ENCODE measurements at regions of chr2 and their contacts with region 1.

Region 1: GRCh38 chr2:174487108-174487819 is 435 bp upstream of the GPR155 start:
- DNase-seq: peak; percentile 88
- H3K4me3 Mint-ChIP-seq: peak overlapping the region; percentile 89
- H3K27ac Mint-ChIP-seq: peak overlapping the region; percentile 68
- H3K4me1 Mint-ChIP-seq: peaks cover 72% of the 10 kb centered on the region
- H3K27me3 Mint-ChIP-seq: no peaks in the 10 kb centered on the region

Region 2: DNA sequence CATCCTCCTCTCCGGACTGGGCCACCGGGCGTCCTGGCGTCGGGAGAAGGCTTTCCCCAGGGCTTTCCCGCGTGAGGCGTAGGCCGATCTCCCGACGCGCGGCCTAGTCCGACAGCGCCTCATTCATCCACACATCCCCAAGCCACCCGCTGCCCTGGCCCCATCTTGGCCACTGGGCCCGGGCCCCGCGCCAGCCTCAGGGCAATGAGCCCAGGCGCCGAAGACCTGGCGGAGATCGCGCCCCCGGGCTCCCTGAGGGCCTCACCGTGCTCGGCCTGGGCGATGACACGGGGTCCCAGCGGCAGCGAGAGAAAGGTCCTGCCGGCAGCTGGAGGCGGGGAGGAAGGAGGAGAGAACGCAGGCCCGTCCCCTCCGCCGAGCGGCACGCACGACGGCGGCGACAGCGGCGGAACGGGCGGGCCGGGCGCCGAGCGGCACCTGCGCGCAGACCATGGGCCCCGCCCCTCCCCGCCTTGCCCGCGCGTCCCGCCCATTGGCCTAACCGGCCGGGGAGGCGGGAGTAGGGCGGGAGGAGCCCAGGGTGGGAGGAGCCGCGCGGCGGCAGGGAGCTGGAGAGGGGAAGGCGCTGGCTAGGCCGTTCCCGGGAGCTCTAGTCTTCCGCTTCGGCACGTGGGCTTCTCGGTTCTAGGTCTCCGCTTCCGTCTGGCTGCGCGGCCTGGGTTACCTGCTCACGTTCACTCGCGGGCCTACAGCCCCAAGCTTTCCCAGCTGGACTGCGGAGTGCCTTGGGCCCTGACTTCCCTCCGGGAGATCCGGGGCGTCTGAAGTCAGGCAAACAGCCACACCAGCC is 238.9 kb before region 1 on chr2 and contains the start of gene OLA1:
- intact Hi-C with region 1: loop called (anchors 2 kb)
- DNase-seq: peak; percentile 95
- H3K4me3 Mint-ChIP-seq: peak within 1 kb of the TSS; percentile 83
- H3K27ac Mint-ChIP-seq: peak within 1 kb of the TSS; percentile 79
- H3K4me1 Mint-ChIP-seq: peaks cover 26% of the 10 kb centered on the region
- H3K27me3 Mint-ChIP-seq: no peaks in the 10 kb centered on the region
- total RNA-seq, gene OLA1: 132 and 139 TPM in 2 replicates

Region 3: DNA sequence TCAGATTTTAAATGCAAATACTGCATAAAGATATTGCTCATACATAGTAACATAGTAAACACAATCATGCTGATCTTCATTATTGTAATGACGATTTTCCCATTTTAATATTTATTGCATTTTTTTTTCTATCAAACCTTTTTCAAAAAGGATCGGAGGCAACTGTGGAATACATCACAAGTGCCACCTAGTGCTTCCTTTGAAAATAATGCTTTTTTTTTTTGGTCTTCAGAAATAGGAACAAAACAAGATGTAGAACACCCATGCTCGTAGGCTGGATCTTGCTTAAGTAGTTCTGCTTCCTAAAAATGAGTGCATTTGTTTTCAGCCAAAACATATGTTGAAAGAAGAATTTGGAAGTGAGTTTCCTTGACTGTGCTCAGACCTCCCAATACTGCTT is 35.3 kb after region 1 on chr2:
- intact Hi-C with region 1: loop called (anchors 2 kb)
- DNase-seq: no peak
- H3K4me3 Mint-ChIP-seq: no peak overlapping the region
- H3K27ac Mint-ChIP-seq: no peak overlapping the region
- H3K4me1 Mint-ChIP-seq: peaks cover 18% of the 10 kb centered on the region
- H3K27me3 Mint-ChIP-seq: peaks cover 2% of the 10 kb centered on the region

Region 4: GRCh38 chr2:174561283-174561971 is 74.2 kb after region 1 on chr2:
- intact Hi-C with region 1: no loop called
- DNase-seq: no peak
- H3K4me3 Mint-ChIP-seq: no peak overlapping the region
- H3K27ac Mint-ChIP-seq: peak overlapping the region; percentile 2
- H3K4me1 Mint-ChIP-seq: peaks cover 8% of the 10 kb centered on the region
- H3K27me3 Mint-ChIP-seq: no peaks in the 10 kb centered on the region

Region 5: DNA sequence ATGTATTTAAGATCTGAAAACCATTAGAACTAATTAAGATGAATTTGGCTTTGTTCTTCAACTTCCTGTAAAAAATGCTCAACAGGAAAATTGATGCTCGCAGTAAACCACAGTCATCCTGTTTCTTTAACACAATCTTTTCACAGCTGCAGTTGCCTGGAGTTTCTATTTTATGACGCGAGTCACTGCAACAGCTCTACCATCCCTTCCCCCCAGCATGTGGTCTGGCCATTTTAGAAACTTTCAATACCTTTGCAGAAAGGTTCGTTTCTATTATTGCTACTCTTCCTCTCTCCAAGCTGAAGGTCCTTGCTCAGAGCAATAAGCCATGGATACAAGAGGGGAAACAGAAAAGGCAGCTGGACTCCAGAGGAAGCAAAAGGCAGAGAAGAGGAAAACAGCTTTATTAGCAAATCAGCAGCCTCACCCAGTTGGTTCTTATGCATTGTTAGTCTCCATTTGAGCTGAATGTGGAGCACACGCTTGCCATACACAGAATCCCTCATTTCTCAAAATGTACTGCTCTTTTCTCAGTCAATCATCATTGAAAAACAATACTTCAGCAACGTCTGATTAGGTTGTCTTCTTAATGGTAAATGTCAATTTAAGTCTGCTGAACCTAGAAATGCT is 106.4 kb after region 1 on chr2:
- intact Hi-C with region 1: loop called (anchors 1 kb)
- DNase-seq: peak; percentile 69
- H3K4me3 Mint-ChIP-seq: peak overlapping the region; percentile 86
- H3K27ac Mint-ChIP-seq: peak overlapping the region; percentile 98
- H3K4me1 Mint-ChIP-seq: peaks cover 58% of the 10 kb centered on the region
- H3K27me3 Mint-ChIP-seq: no peaks in the 10 kb centered on the region

Region 6: DNA sequence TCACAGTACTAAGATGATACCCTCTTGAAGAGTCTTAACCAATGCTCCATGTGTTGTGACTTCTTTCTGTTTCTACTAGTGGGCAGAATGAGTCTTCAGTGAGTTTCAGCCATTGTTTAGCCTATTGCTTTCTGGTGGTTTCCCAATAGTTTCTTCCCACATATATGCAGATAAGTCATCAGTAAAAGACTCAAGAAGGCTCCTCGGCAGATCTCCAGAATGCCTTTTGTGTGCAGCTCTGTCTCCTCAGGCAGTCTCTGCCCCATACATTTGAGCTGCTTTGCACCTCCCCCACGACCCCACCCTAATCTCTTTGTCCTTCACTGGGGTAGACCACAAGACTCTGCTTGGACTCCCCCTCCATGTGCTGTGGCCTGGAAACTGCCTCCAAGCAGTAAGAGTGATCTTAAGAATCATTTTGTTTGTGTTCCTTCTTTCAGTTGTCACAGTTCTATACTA is 348.6 kb after region 1 on chr2:
- intact Hi-C with region 1: loop called (anchors 5 kb)
- DNase-seq: no peak
- H3K4me3 Mint-ChIP-seq: peak overlapping the region; percentile 43
- H3K27ac Mint-ChIP-seq: peak overlapping the region; percentile 96
- H3K4me1 Mint-ChIP-seq: peaks cover 40% of the 10 kb centered on the region
- H3K27me3 Mint-ChIP-seq: no peaks in the 10 kb centered on the region

Region 7: DNA sequence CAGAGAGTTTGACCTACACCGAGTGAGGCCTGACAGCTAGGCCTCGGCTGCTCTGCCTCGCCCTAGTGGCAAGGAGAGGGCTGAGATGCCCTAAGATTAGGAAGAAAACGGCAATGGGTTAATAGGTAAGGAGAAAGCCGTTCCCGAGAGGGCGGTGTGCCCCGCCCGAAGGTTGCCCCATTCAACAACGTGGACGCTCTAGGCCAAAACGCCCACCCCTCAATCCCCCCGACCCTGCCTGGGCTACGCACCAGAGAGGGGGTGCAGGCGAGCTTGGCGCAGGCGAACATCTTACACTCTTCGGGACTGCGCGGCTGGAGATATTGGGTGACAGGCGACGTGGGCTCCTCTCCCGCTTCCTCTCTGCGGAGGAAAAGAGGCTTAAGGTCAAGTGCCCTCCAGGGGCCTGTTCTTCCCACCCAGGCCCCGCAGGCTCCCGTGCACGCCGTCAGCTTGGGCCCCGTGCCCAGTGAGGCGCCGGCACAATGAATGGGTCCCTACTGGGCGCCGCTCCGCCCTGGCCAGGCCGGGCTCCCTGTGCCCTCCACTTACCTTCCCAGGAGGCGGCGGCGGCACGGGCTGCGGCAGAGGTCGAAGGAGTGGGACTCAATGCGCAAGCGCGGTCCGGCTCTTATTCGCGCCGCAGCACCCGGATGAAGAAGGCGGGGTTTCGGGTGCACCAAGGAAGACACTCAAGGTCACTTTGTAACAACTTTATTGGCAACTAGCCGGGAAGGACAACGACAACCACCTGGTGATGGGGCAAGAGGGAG is 694.0 kb after region 1 on chr2 and contains the start of gene ATP5MC3:
- intact Hi-C with region 1: loop called (anchors 1 kb)
- DNase-seq: peak; percentile 89
- H3K4me3 Mint-ChIP-seq: peak within 1 kb of the TSS; percentile 89
- H3K27ac Mint-ChIP-seq: peak within 1 kb of the TSS; percentile 84
- H3K4me1 Mint-ChIP-seq: peaks cover 22% of the 10 kb centered on the region
- H3K27me3 Mint-ChIP-seq: no peaks in the 10 kb centered on the region
- total RNA-seq, gene ATP5MC3: 365 and 380 TPM in 2 replicates

Measured in activated T-helper 1 cell treated with anti-CD3 and anti-CD28 coated beads, Interleukin-12 subunit alpha, Interleukin-12 subunit beta, Interleukin-2, Interleukin-4 antibody, amounts not matched to agents 30 ng/mL and 10 ng/mL and 1 ng/mL, durations not matched to agents 14 hours and 24 hours and 36 hours (primary cell).